Posterior cingulate gyrus (tissue), 11 donors: ENCODE measurements at regions of chr13 and their contacts with region 1.

Region 1: GRCh38 chr13:101144808-101145419 is 271.4 kb downstream of the NALCN start:
- DNase-seq: no peak

Region 2: GRCh38 chr13:100954430-100955305 is 190.2 kb before region 1 on chr13:
- intact Hi-C with region 1: no loop called
- DNase-seq: no peak

Region 3: DNA sequence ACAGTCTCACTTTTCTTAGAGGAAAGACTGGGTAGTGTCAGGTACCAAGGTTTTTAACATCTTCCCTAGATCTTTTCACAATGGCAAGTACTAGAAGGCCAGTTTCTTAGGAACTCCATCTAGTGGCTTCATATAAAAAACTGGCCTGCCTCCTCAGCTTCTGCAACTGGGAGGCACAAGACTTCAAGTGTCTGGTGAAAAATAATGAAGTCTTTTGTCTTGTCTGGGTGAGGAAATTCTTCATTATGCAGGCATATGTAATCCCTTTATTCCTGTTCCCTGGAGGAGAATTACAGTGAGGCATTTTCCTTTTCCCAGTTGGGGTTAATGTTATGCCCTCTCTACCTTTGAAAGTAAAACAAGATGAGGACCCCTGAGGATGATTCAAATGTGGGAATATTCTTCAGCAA is 29.1 kb before region 1 on chr13:
- intact Hi-C with region 1: no loop called
- DNase-seq: no peak

Region 4: GRCh38 chr13:101474419-101474957 is 329.6 kb after region 1 on chr13:
- intact Hi-C with region 1: loop called (anchors 1 kb)
- DNase-seq: peak in 8 of 10 donors; percentile 24 to 93 (median 45)

Region 5: DNA sequence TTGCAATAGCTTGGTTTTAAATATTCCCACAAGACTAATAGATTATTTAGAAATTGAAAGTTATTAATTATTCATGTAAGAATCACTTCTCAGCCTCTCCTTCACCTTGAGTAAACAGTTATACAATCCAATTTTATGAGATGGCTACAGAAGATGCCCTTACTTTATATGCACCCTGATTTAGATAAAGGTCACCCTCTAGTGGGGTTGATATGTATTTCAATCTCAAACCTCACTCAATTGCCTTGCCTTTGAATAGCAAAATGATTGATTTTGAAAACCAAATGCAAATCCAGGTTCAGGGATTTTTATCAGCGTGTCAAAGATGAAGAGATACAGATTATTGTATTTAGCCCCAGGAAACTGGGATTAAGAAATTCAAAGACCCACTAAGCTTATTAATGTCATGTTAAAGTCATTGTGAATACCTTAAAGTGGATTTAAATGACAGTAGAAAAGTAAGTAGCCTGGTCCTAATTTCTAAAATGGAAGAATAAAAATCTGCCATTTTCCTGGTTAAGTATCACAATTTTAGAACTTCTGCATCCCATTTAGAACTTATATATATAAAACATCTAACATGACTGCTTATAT is 612.6 kb after region 1 on chr13:
- intact Hi-C with region 1: loop called (anchors 10 kb)
- DNase-seq: no peak

Region 6: DNA sequence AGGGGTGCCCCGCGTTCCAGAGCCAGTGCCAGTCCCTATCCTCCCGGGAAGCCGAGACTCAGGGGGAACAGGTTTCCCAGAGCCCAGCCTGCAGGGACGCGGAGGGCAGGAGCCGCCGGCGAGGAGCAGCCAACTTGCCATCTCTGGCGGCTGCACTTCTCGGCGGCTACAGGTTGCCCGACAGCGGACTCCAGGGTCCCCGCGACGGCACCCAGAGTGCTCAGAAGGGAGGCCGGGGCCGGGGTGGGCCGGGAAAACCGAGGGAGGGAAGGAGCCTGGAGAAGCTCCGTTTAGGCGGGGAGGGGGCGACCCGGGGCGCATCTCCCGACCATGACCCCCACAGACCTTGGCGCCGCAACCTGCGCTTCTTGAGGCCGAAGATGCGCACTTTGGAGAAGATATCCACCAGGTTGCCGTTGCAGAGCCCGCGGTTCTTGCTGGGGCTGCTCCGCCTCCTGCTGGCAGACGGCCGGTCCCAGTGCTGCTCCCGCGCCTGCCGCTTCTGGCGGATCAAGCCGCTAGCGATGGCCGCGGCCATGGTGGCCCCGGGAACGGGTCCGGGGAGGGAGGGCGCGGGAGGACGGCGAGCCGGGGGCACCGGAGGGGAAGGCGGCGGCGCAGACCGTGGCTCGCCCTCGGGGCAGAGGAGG is 771.3 kb after region 1 on chr13:
- intact Hi-C with region 1: loop called (anchors 10 kb)
- DNase-seq: peak; percentile 21 to 93 (median 60)